Panc1 (cell line): ENCODE measurements at regions of chr17 and their contacts with region 1.

Region 1: DNA sequence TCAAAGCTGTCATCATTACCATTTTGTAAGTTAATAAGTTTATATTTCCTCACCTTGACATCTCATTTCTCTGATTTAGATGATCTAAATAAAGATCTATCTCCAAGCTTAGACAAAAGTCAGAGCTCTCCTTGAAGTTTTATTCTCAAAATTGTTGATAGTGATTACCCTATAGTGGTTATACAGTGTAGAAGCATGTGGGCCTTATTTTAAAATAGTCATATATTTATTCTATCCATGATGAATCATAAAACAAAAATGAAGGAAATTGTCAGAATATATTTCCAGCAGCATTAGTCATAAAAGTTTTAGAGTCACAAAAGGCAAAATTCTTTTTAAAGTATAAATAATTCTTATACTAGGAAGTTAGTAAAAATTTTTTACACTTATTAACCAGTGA is 49.0 kb downstream of the RHOT1 start:
- DNase-seq: no peak
- ATAC-seq: no peak
- H3K4me3 ChIP-seq: no peak overlapping the region
- H3K27ac ChIP-seq: no peak overlapping the region
- H3K4me1 ChIP-seq: no peaks in the 10 kb centered on the region
- H3K27me3 ChIP-seq: no peaks in the 10 kb centered on the region
- CTCF ChIP-seq: no peak

Region 2: GRCh38 chr17:31394544-31394943 is 796.8 kb before region 1 on chr17:
- CTCF ChIA-PET with region 1: no interaction called
- POLR2A ChIA-PET with region 1: interaction called, 25 read pairs
- in situ Hi-C with region 1: no loop called
- intact Hi-C with region 1: no loop called
- DNase-seq: no peak
- ATAC-seq: no peak
- H3K4me3 ChIP-seq: no peak overlapping the region
- H3K27ac ChIP-seq: no peak overlapping the region
- H3K4me1 ChIP-seq: no peaks in the 10 kb centered on the region
- H3K27me3 ChIP-seq: no peaks in the 10 kb centered on the region
- CTCF ChIP-seq: no peak

Region 3: DNA sequence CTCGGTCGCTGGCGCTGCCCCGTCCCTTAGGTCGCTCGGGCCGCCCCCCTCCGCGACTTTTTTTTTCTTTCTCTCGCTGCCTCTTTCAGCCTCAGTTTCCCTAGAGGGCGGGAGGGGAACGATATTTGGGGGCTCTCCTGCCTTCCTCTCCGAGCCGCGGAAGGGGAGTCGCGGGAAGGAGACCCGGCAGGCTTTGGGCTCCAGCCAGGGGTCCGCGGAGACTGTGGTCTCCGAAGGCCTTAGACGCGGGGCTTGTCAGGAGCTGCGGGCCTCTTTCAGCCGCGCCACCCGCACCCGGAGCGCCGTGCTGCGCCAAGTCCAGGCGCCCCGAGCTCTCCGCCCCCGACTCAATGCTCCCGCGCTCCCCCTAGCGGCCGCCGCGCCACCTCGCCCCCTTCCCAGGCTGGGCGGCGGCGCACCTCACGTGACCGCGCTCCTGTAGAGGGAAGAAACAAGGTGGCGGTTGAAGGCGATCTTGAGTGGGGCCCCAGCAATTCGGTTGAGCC is 184.3 kb before region 1 on chr17 and contains the start of gene LRRC37B:
- CTCF ChIA-PET with region 1: no interaction called
- POLR2A ChIA-PET with region 1: interaction called, 12 read pairs
- in situ Hi-C with region 1: no loop called
- intact Hi-C with region 1: no loop called
- DNase-seq: no peak
- ATAC-seq: peak; percentile 96
- H3K4me3 ChIP-seq: peak within 1 kb of the TSS; percentile 80 to 90
- H3K27ac ChIP-seq: peak within 1 kb of the TSS; percentile 76
- H3K4me1 ChIP-seq: peaks cover 5% of the 10 kb centered on the region
- H3K27me3 ChIP-seq: no peaks in the 10 kb centered on the region
- CTCF ChIP-seq: peak; percentile 98
- total RNA-seq, gene LRRC37B: 24.9 TPM

Region 4: GRCh38 chr17:32142038-32142856 is 49.1 kb before region 1 on chr17 and contains the start of gene RHOT1:
- CTCF ChIA-PET with region 1: interaction called, 11 read pairs
- POLR2A ChIA-PET with region 1: interaction called, 7 read pairs
- in situ Hi-C with region 1: no loop called
- intact Hi-C with region 1: no loop called
- DNase-seq: peak; percentile 66
- ATAC-seq: peak; percentile 85
- H3K4me3 ChIP-seq: peak within 1 kb of the TSS; percentile 95 to 100
- H3K27ac ChIP-seq: peak within 1 kb of the TSS; percentile 94
- H3K4me1 ChIP-seq: peaks cover 16% of the 10 kb centered on the region
- H3K27me3 ChIP-seq: no peaks in the 10 kb centered on the region
- CTCF ChIP-seq: peak; percentile 86
- total RNA-seq, gene RHOT1: 39.2 TPM

Region 5: DNA sequence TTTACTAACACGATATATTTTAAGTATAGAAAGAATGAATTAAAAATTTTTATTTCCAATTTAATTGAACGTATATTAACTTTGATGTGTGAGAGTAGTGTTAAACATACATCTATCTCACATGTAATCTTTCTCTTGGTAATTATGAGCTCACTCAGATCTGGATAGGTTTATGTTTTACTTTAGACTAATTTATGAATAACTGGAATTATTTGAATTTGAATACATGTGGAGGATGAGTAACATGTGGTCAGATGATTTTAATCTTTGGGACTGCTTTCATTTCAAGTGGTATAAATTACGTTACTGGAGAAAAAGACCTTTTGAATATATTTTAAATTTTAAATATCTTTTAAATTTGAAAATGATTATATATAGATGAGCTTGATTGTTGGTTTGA is 24.4 kb after region 1 on chr17:
- CTCF ChIA-PET with region 1: no interaction called
- POLR2A ChIA-PET with region 1: interaction called, 10 read pairs
- in situ Hi-C with region 1: no loop called
- intact Hi-C with region 1: no loop called
- DNase-seq: no peak
- ATAC-seq: no peak
- H3K4me3 ChIP-seq: no peak overlapping the region
- H3K27ac ChIP-seq: no peak overlapping the region
- H3K4me1 ChIP-seq: no peaks in the 10 kb centered on the region
- H3K27me3 ChIP-seq: no peaks in the 10 kb centered on the region
- CTCF ChIP-seq: no peak